Dorsolateral prefrontal cortex (tissue), 120 donors: ENCODE measurements at regions of chr1 and their contacts with region 1.

Region 1: GRCh38 chr1:181479137-181479745 is 4.1 kb upstream of the CACNA1E start:
- DNase-seq: peak in 7 of 10 donors; percentile 29 to 73 (median 66)
- H3K4me3 ChIP-seq: no peak overlapping the region
- H3K27ac ChIP-seq: no peak overlapping the region
- H3K27me3 ChIP-seq: peaks cover 0 to 24% (median under 1%) of the 10 kb centered on the region in 45 donors
- CTCF ChIP-seq: peak; percentile 51 to 97 (median 88)

Region 2: GRCh38 chr1:181347495-181348390 is 131.5 kb before region 1 on chr1:
- intact Hi-C with region 1: no loop called
- DNase-seq: peak in 1 of 10 donors; percentile 35
- H3K4me3 ChIP-seq: no peak overlapping the region
- H3K27ac ChIP-seq: no peak overlapping the region
- H3K27me3 ChIP-seq: peaks cover 0 to 12% (median 0%) of the 10 kb centered on the region in 45 donors
- CTCF ChIP-seq: no peak

Region 3: DNA sequence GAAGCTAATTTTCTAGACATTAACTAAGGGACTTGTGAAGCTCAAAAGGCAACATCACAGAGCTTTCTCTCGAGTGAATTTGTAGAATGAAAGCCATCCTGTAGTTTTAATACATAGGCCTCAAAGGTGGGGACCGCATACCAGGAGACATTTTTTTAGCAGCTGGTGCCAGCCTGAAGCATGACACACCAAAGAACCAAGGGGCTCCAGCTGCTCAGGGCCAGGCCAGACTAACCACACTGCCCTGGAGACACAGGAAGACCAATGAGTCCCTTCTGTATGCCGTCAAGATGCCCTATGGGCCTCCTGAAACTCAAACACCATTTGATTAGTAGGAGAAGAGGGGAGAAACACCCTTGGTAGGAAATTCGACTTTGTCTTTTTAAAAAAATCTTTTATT is 109.8 kb before region 1 on chr1:
- intact Hi-C with region 1: no loop called
- DNase-seq: no peak
- H3K4me3 ChIP-seq: no peak overlapping the region
- H3K27ac ChIP-seq: no peak overlapping the region
- H3K27me3 ChIP-seq: no peaks in the 10 kb centered on the region
- CTCF ChIP-seq: no peak

Region 4: DNA sequence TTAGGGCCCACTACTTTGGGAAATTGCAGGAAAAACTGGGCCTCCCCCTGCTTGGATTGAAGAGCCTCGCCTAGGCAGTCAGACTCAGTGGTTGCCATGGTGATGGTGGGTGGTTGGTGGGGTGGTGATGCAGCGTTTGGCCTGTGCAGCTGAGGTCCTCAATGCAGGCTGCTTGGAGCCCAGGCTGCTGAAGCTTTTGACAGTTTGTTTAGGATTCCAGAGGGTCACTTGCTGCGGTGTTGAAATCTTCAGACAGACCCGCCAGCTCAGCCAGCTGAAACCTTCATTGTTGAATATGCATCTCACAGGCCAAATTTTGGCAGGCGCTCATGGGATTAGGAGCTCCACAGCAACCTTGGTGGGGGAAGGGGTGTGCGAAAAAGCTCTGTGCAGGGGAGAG is 72.0 kb after region 1 on chr1:
- intact Hi-C with region 1: loop called (anchors 2 to 5 kb)
- DNase-seq: peak; percentile 26 to 89 (median 82)
- H3K4me3 ChIP-seq: no peak overlapping the region
- H3K27ac ChIP-seq: peak overlapping the region in 53 of 59 donors; percentile 23 to 96 (median 75)
- H3K27me3 ChIP-seq: no peaks in the 10 kb centered on the region
- CTCF ChIP-seq: no peak

Region 5: GRCh38 chr1:181936768-181937581 is 457.7 kb after region 1 on chr1:
- intact Hi-C with region 1: loop called (anchors 2 to 5 kb)
- DNase-seq: peak in 9 of 10 donors; percentile 50 to 77 (median 66)
- H3K4me3 ChIP-seq: peak overlapping the region in 1 of 59 donors; percentile 17
- H3K27ac ChIP-seq: no peak overlapping the region
- H3K27me3 ChIP-seq: no peaks in the 10 kb centered on the region
- CTCF ChIP-seq: peak; percentile 25 to 76 (median 60)

Region 6: DNA sequence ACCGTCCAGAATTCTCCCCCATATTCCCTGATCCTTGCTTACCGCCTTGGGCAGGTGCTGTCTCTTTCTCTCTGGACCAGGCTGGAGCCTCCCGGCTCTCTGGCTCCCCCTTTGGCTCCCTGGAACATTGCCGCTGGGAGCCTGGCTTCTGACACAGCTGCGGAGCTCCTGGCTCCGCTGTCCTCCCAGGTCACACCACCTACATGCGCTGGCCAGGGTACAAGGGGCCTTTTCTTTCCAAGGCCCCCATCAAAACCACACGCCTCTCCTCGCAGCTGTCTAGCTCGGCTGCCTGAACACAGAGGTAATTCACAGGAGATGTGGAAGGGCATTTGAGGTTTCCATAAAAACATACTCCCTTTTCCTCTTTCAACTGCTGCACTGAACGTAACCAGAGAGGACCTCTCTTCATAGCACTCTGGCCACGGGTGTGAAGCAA is 589.8 kb after region 1 on chr1:
- intact Hi-C with region 1: loop called in 1 of 2 experiments (anchors 10 kb)
- DNase-seq: peak in 6 of 10 donors; percentile 33 to 71 (median 60)
- H3K4me3 ChIP-seq: peak overlapping the region in 11 of 59 donors; percentile 6 to 34 (median 23)
- H3K27ac ChIP-seq: no peak overlapping the region
- H3K27me3 ChIP-seq: no peaks in the 10 kb centered on the region
- CTCF ChIP-seq: peak in 53 of 56 donors; percentile 20 to 74 (median 63)

Region 7: GRCh38 chr1:182391362-182392044 is 912.3 kb after region 1 on chr1 and contains the start of gene GLUL:
- intact Hi-C with region 1: loop called (anchors 5 to 10 kb)
- DNase-seq: peak; percentile 79 to 96 (median 93)
- H3K4me3 ChIP-seq: peak within 1 kb of the TSS; percentile 67 to 99 (median 92)
- H3K27ac ChIP-seq: peak within 1 kb of the TSS; percentile 92 to 100 (median 98)
- H3K27me3 ChIP-seq: peaks cover 0 to 4% (median 0%) of the 10 kb centered on the region in 45 donors
- CTCF ChIP-seq: peak in 16 of 56 donors; percentile 3 to 44 (median 14)
- total RNA-seq, gene GLUL: 1,265 to 6,769 (median 2,230) TPM